Activated CD8-positive, alpha-beta T cell treated with anti-CD3 and anti-CD28 coated beads for 36 hours (primary cell): ENCODE measurements at regions of chr5 and their contacts with region 1.

Region 1: GRCh38 chr5:32092938-32093812 is 80.9 kb downstream of the GOLPH3 start:
- DNase-seq: peak; percentile 84
- ATAC-seq: peak; percentile 98
- H3K4me3 Mint-ChIP-seq: no peak overlapping the region
- H3K27ac Mint-ChIP-seq: no peak overlapping the region
- H3K4me1 Mint-ChIP-seq: peaks cover 6% of the 10 kb centered on the region
- H3K27me3 Mint-ChIP-seq: no peaks in the 10 kb centered on the region
- CTCF ChIP-seq: peak; percentile 73

Region 2: GRCh38 chr5:31581498-31582099 is 511.6 kb before region 1 on chr5:
- CTCF ChIA-PET with region 1: interaction called, 7 read pairs
- POLR2A ChIA-PET with region 1: no interaction called
- intact Hi-C with region 1: loop called (anchors 2 kb)
- DNase-seq: no peak
- ATAC-seq: no peak
- H3K4me3 Mint-ChIP-seq: no peak overlapping the region
- H3K27ac Mint-ChIP-seq: no peak overlapping the region
- H3K4me1 Mint-ChIP-seq: no peaks in the 10 kb centered on the region
- H3K27me3 Mint-ChIP-seq: peaks cover 17% of the 10 kb centered on the region
- CTCF ChIP-seq: peak; percentile 60

Region 3: GRCh38 chr5:31825518-31826068 is 267.6 kb before region 1 on chr5:
- CTCF ChIA-PET with region 1: interaction called, 31 read pairs
- POLR2A ChIA-PET with region 1: no interaction called
- intact Hi-C with region 1: loop called (anchors 5 kb)
- DNase-seq: peak; percentile 62
- ATAC-seq: peak; percentile 68
- H3K4me3 Mint-ChIP-seq: no peak overlapping the region
- H3K27ac Mint-ChIP-seq: no peak overlapping the region
- H3K4me1 Mint-ChIP-seq: peaks cover 3% of the 10 kb centered on the region
- H3K27me3 Mint-ChIP-seq: peaks cover 12% of the 10 kb centered on the region
- CTCF ChIP-seq: peak; percentile 51

Region 4: GRCh38 chr5:32076699-32077695 is 16.2 kb before region 1 on chr5:
- CTCF ChIA-PET with region 1: interaction called, 19 read pairs
- POLR2A ChIA-PET with region 1: no interaction called
- intact Hi-C with region 1: no loop called
- DNase-seq: peak; percentile 69
- ATAC-seq: no peak
- H3K4me3 Mint-ChIP-seq: no peak overlapping the region
- H3K27ac Mint-ChIP-seq: no peak overlapping the region
- H3K4me1 Mint-ChIP-seq: no peaks in the 10 kb centered on the region
- H3K27me3 Mint-ChIP-seq: no peaks in the 10 kb centered on the region
- CTCF ChIP-seq: peak; percentile 85

Region 5: DNA sequence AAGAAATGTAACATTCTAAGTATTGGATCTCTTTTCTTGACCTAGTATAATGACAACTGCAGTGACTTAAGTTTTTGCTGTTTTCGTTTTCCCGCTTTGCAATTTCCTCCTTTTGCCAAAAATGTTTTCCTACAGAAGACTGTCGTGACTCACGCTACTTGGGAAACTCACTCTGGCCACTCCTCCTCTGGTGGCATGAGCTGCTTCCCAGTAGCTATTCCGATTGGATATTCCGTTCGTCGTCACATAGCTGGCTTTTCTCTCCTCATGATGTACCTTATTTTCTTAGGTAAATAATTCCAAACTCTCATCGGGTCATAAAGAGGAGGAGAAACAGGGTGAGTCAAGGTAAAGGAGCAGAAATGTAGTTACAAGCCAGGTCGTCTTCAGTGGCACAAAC is 16.1 kb after region 1 on chr5:
- CTCF ChIA-PET with region 1: interaction called, 14 read pairs
- POLR2A ChIA-PET with region 1: no interaction called
- intact Hi-C with region 1: no loop called
- DNase-seq: no peak
- ATAC-seq: no peak
- H3K4me3 Mint-ChIP-seq: no peak overlapping the region
- H3K27ac Mint-ChIP-seq: no peak overlapping the region
- H3K4me1 Mint-ChIP-seq: peaks cover 2% of the 10 kb centered on the region
- H3K27me3 Mint-ChIP-seq: no peaks in the 10 kb centered on the region
- CTCF ChIP-seq: no peak

Region 6: GRCh38 chr5:33631786-33632185 is 1538.6 kb after region 1 on chr5:
- CTCF ChIA-PET with region 1: no interaction called
- POLR2A ChIA-PET with region 1: no interaction called
- intact Hi-C with region 1: no loop called
- DNase-seq: no peak
- ATAC-seq: no peak
- H3K4me3 Mint-ChIP-seq: no peak overlapping the region
- H3K27ac Mint-ChIP-seq: no peak overlapping the region
- H3K4me1 Mint-ChIP-seq: no peaks in the 10 kb centered on the region
- H3K27me3 Mint-ChIP-seq: no peaks in the 10 kb centered on the region
- CTCF ChIP-seq: no peak